Posterior vena cava (tissue), 2 donors: ENCODE measurements at regions of chr16 and their contacts with region 1.

Region 1: GRCh38 chr16:79295756-79296155 is 304.8 kb downstream of the MAF start:
- DNase-seq: no peak

Region 2: GRCh38 chr16:79247386-79247785 is 48.4 kb before region 1 on chr16:
- intact Hi-C with region 1: loop called in 1 of 2 experiments (anchors 1 kb)
- DNase-seq: no peak